ENCODE measurements at regions of chr6 and their contacts with region 1.

Region 1: DNA sequence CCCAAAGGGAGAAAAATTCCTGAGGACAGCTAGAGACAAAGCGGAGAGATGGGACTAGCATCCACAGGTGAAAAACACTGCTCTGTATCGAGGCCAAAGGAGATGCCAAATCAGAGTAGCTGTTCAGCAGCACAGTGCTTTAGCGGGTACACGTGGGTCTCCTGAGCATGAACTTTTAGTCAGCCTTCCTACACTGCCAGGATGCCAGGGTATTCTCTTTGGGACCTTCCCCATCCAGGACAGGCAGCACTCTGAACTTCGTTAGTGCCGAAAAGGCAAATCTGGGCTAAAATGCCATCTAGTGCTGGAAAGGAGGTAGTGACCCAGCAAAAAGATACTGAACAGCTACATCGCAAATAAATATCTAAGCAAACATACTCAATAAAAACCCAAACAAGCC is 64.9 kb downstream of the C6orf58 start:
- DNase-seq: peak; percentile 28
- ATAC-seq: peak; percentile 86
- H3K4me3 ChIP-seq: peak overlapping the region in 1 of 2 experiments; percentile 9; a peak in 1 of 4 replicates
- H3K27ac ChIP-seq: no peak overlapping the region
- H3K4me1 ChIP-seq: no peaks in the 10 kb centered on the region
- H3K27me3 ChIP-seq: peaks cover 2% of the 10 kb centered on the region; the same call in 1 of the 2 replicates
- CTCF ChIP-seq: peak; percentile 80

Region 2: DNA sequence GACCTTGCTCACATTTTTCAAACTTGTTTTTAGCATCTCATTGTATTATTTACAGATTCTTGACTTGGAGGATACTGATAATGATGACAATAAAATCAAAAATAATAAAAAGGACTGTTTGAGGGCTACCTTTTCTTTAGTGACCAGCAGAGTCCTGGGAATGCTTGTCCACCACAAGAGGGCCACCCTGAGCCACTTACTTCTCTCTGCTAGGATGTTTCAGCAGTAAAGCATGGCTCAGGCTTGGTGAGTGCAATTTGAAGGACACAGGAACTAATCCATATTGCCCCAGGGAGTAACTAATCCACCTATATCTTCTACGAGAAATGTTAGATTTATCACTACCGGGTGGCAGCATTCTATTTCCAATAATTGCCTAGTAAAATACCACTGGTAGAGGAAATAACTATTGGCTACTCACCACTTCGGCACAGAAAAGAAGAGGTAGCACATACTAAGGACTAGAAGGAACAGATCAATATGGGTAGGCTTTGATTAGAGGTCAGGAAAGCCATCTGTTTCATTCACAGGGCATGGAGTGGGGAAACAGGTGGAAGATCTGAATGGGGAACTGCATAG is 176.9 kb before region 1 on chr6:
- CTCF ChIA-PET with region 1: no interaction called
- POLR2A ChIA-PET with region 1: no interaction called
- in situ Hi-C with region 1: no loop called
- intact Hi-C with region 1: loop called (anchors 10 kb)
- DNase-seq: peak; percentile 52
- ATAC-seq: peak; percentile 96
- H3K4me3 ChIP-seq: no peak overlapping the region
- H3K27ac ChIP-seq: no peak overlapping the region
- H3K4me1 ChIP-seq: no peaks in the 10 kb centered on the region
- H3K27me3 ChIP-seq: no peaks in the 10 kb centered on the region
- CTCF ChIP-seq: peak; percentile 92

Region 3: DNA sequence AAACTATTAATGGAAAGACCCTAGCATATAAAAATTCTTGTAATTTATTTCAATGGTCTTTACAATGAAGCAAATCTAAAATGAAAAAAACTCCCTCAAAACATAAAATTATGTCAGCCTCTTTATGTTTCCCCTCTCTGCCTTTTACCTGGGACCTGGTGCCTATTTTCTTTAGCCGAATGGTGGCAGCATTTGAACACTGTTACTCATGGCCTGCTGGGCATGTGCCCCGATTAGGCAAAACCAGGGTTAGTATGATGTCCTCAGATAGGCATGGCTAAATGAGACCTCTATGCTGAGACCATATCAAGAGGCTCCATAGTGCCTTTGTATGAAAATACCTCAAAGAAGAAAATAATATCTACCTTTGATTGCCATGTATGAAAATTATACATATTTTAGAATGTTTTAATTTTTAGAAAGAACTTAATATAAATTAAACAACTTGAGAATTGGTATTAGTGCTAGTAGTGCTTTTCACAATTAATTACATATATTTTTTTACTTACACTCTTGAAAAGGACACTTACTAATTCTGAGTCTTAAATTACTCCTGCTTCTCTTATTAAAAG is 87.4 kb before region 1 on chr6:
- CTCF ChIA-PET with region 1: no interaction called
- POLR2A ChIA-PET with region 1: no interaction called
- in situ Hi-C with region 1: no loop called
- intact Hi-C with region 1: loop called (anchors 2 kb)
- DNase-seq: no peak
- ATAC-seq: peak; percentile 93
- H3K4me3 ChIP-seq: no peak overlapping the region
- H3K27ac ChIP-seq: no peak overlapping the region
- H3K4me1 ChIP-seq: no peaks in the 10 kb centered on the region
- H3K27me3 ChIP-seq: peaks cover 2% of the 10 kb centered on the region; the same call in 1 of the 2 replicates
- CTCF ChIP-seq: peak; percentile 78

Region 4: GRCh38 chr6:127606131-127606562 is 35.8 kb before region 1 on chr6:
- CTCF ChIA-PET with region 1: interaction called, 10 read pairs
- POLR2A ChIA-PET with region 1: no interaction called
- in situ Hi-C with region 1: no loop called
- intact Hi-C with region 1: loop called (anchors 5 kb)
- DNase-seq: no peak
- ATAC-seq: peak; percentile 81
- H3K4me3 ChIP-seq: no peak overlapping the region
- H3K27ac ChIP-seq: no peak overlapping the region
- H3K4me1 ChIP-seq: no peaks in the 10 kb centered on the region
- H3K27me3 ChIP-seq: no peaks in the 10 kb centered on the region
- CTCF ChIP-seq: peak; percentile 61

Region 5: GRCh38 chr6:127725821-127726220 is 83.9 kb after region 1 on chr6:
- CTCF ChIA-PET with region 1: no interaction called
- POLR2A ChIA-PET with region 1: no interaction called
- in situ Hi-C with region 1: no loop called
- intact Hi-C with region 1: no loop called
- DNase-seq: no peak
- ATAC-seq: no peak
- H3K4me3 ChIP-seq: no peak overlapping the region
- H3K27ac ChIP-seq: no peak overlapping the region
- H3K4me1 ChIP-seq: no peaks in the 10 kb centered on the region
- H3K27me3 ChIP-seq: peaks cover 22% of the 10 kb centered on the region
- CTCF ChIP-seq: no peak

Region 6: DNA sequence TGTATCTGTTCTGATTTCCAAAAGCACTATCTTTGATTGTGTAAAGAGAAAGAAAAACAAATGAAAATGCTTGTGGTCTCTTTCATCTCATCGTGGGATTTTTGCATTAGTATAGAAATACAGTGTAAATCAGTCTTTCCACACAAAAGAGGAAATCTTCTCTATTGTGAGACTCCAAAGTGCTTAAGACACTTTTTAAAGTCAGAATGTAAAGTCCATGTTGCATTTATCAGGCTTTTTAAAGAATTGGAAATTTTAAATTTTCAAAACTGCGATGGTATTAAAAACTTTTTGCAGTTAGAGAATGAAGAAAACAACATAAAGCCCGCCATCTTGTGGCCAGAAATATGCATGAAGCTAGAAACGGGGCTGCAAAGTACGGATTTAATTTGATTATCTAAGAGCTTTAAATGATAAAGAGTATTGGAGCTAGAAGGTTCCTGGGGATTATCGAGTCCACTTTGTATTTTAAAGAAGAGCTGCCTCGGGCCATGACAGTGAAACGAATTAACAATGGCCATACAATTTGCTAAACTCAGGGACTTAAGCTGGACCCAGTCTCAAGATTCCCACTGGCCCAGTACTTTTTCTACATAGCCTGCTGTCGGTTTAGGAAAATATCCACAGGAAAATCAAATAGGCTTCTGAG is 1728.5 kb after region 1 on chr6:
- CTCF ChIA-PET with region 1: no interaction called
- POLR2A ChIA-PET with region 1: no interaction called
- in situ Hi-C with region 1: no loop called
- intact Hi-C with region 1: no loop called
- DNase-seq: peak; percentile 20
- ATAC-seq: peak; percentile 65; the same call in 1 of the 2 replicates
- H3K4me3 ChIP-seq: no peak overlapping the region
- H3K27ac ChIP-seq: peak overlapping the region; percentile 74; the same call in 1 of the 2 replicates
- H3K4me1 ChIP-seq: peaks cover 16% of the 10 kb centered on the region; the same call in 1 of the 2 replicates
- H3K27me3 ChIP-seq: no peaks in the 10 kb centered on the region
- CTCF ChIP-seq: peak; percentile 74